ENCODE measurements at regions of chr17 and their contacts with region 1.

Region 1: GRCh38 chr17:29617125-29617480 is 5.6 kb downstream of the CORO6 start:
- DNase-seq: peak; percentile 97
- H3K4me3 Mint-ChIP-seq: peak overlapping the region; percentile 81
- H3K27ac Mint-ChIP-seq: peak overlapping the region; percentile 80
- H3K4me1 Mint-ChIP-seq: peaks cover 48% of the 10 kb centered on the region
- H3K27me3 Mint-ChIP-seq: peaks cover 9% of the 10 kb centered on the region

Region 2: DNA sequence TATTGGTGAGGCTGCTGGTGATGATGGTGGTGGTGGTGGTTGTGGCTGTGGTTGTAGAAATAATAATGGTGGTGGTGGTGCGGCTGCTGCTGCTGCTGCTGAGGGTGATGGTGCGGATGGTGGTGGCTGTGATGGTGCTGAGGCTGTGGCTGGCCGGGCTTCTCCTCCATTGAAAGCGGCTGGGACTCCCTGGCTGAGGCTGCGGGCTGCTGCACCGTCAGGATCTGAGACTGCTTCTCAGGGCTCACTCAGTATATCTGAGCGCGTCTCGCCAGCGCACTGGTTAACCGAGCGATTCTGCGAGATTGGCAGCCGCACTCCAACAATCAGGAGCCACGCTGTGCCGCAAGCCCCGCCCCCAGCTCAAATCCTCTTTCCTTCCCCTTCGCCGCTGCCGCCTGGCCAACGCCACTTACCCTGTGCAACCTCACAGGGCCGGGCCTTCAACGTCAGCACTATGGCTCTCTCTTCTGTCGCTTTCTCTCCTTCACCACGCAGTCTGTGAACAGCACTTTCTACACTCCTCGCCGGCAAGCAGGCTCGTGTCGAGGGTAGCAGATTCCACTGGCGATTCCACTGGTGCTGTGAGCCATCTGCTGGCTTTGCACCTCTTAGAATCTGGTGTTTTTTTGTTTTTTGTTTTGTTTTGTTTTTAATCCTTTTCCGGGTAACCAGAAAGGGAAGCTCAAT is 323.1 kb before region 1 on chr17 and contains the start of gene NUFIP2:
- CTCF ChIA-PET with region 1: interaction called, 5 read pairs
- intact Hi-C with region 1: loop called (anchors 2 kb)
- DNase-seq: peak; percentile 99
- H3K4me3 Mint-ChIP-seq: peak within 1 kb of the TSS; percentile 100
- H3K27ac Mint-ChIP-seq: peak within 1 kb of the TSS; percentile 99
- H3K4me1 Mint-ChIP-seq: peaks cover 25% of the 10 kb centered on the region
- H3K27me3 Mint-ChIP-seq: no peaks in the 10 kb centered on the region
- total RNA-seq, gene NUFIP2: 51.0 to 57.8 TPM

Region 3: GRCh38 chr17:29568331-29569244 is 48.5 kb before region 1 on chr17 and contains the start of gene TP53I13:
- CTCF ChIA-PET with region 1: interaction called, 20 read pairs
- intact Hi-C with region 1: loop called (anchors 1 kb)
- DNase-seq: peak; percentile 91
- H3K4me3 Mint-ChIP-seq: peak within 1 kb of the TSS; percentile 94
- H3K27ac Mint-ChIP-seq: peak within 1 kb of the TSS; percentile 88
- H3K4me1 Mint-ChIP-seq: peaks cover 12% of the 10 kb centered on the region
- H3K27me3 Mint-ChIP-seq: no peaks in the 10 kb centered on the region
- total RNA-seq, gene TP53I13: 30.9 to 37.2 TPM

Region 4: DNA sequence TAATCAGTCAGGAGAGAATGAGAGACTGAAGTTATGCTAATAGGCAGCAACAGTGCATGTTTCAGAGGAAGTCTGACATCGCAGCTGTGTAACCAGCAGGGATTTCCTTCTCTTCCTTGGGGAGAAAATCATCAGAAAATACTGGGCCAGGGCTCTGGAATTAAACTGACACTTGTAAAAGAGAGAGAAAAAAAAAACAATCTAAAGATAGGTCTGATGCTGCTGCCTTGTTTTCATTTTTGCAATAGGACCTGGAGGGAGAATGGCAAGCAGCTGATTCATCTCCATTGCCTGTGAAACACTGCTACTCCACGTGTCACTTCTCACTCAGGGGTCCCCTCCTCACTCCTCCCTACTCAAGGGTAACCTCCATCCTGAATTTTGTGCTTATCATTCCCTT is 23.3 kb after region 1 on chr17:
- CTCF ChIA-PET with region 1: interaction called, 40 read pairs
- intact Hi-C with region 1: loop called (anchors 1 kb)
- DNase-seq: no peak
- H3K4me3 Mint-ChIP-seq: no peak overlapping the region
- H3K27ac Mint-ChIP-seq: peak overlapping the region; percentile 82
- H3K4me1 Mint-ChIP-seq: peaks cover 38% of the 10 kb centered on the region
- H3K27me3 Mint-ChIP-seq: no peaks in the 10 kb centered on the region

Region 5: DNA sequence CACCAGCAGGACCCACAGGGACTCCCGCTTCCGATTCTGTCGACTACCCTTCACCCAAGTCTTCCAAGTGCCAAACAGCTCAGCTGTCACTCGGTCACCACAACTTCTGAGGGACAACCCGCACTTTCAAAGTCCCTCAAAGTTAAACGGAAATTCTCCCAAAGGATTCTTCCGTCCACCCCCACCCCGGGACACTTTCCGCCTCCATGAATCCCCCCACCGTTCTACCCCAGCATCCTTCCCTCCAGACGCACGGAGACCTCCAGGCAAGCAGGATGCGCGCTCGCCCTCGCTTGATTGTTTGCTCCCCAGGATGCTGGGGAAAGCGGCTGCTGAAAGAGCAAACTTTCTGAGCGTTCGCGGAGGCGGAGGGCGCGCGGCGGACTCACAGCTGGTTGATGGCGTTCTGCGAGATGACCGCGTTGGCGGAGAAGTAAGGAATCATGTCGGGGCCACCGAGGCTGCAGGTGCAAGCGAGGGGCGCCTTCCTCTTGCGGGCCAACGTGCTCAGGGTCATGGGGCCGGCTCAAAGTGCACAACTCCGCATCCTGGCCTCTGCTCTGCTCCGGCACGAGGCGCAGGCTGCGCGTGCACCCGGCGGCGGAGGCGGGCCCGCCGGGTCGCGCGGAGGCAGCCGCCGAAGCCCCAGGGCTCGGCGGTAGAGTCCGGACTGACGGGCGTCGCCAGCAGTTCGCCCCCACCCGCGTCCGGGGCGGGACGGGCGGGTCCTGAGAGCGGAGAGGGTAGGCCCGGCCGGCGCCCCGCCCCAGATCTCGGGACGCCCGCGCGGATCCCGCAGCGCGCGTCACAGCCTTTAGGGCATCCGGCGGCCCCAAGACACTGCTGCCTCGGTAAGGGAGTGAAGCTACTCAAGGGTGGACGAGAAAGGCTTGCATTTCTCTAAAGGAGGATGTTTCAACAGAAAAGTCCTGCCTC is 143.9 kb after region 1 on chr17:
- CTCF ChIA-PET with region 1: interaction called, 7 read pairs
- intact Hi-C with region 1: loop called (anchors 1 kb)
- DNase-seq: peak; percentile 95
- H3K4me3 Mint-ChIP-seq: peak overlapping the region; percentile 90
- H3K27ac Mint-ChIP-seq: peak overlapping the region; percentile 94
- H3K4me1 Mint-ChIP-seq: peaks cover 32% of the 10 kb centered on the region
- H3K27me3 Mint-ChIP-seq: no peaks in the 10 kb centered on the region